Activated naive CD4-positive, alpha-beta T cell treated with anti-CD3 and anti-CD28 coated beads for 36 hours (primary cell): ENCODE measurements at regions of chr14 and their contacts with region 1.

Region 1: DNA sequence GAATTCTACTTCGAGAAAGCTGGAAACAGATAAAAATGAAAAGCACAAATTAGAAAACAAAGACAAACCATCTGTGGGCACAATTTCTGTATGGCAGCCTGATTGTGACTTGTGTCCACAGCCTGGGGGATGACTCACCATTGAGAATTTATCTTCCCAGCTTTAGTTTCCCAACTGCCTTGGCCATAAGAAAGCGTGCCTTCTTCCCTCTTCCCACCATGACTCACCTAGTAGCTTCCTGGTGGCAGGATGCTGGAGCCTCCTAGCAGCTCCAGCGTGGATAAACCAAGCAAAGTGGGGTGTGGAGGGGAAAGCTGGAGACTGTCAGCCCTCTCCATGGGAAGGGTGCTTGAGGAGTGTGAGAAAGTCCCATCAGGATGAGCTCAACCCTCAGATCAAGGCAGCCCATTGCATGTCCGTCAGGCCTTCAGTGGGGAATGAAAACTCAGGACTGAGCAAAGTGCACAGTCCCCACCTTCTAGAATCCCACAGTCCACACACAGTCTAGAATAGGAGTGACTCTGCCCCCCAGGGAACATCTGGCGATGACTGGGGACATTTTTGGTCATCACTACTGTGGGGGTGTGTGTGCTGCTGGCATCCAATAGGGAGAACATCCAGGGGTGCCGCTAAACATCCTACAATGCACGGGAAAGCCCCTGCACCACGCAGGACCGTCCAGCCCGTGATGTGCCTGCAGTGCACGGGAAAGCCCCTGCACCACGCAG is 22.4 kb upstream of the SERPINA6 start:
- DNase-seq: no peak
- H3K4me3 Mint-ChIP-seq: no peak overlapping the region
- H3K27ac Mint-ChIP-seq: peak overlapping the region; percentile 54
- H3K4me1 Mint-ChIP-seq: peaks cover 33% of the 10 kb centered on the region
- H3K27me3 Mint-ChIP-seq: peaks cover 35% of the 10 kb centered on the region

Region 2: DNA sequence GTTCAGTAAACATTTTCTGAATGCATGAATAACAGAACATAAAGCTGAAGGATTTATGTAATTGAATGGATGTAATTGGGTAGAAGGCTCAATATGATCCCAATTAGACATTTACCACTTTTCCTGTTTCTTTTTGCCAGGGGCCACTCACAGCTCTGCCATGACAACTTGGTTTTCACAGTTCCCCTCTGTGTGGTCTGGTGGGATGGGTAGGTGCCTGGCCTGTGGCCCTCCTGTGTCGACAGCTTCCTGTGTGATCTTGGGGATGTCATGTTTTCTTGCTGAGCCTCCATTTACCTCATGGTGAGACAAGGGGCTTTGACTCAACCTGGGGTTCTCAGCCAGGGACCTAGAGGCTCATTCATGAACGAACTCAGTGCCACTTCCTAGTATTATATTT is 39.9 kb before region 1 on chr14:
- CTCF ChIA-PET with region 1: no interaction called
- intact Hi-C with region 1: no loop called
- DNase-seq: no peak
- H3K4me3 Mint-ChIP-seq: no peak overlapping the region
- H3K27ac Mint-ChIP-seq: no peak overlapping the region
- H3K4me1 Mint-ChIP-seq: no peaks in the 10 kb centered on the region
- H3K27me3 Mint-ChIP-seq: peaks cover 15% of the 10 kb centered on the region

Region 3: GRCh38 chr14:94392510-94392935 is 47.0 kb after region 1 on chr14:
- CTCF ChIA-PET with region 1: no interaction called
- intact Hi-C with region 1: loop called (anchors 1 kb)
- DNase-seq: peak; percentile 85
- H3K4me3 Mint-ChIP-seq: no peak overlapping the region
- H3K27ac Mint-ChIP-seq: peak overlapping the region; percentile 82
- H3K4me1 Mint-ChIP-seq: peaks cover 48% of the 10 kb centered on the region
- H3K27me3 Mint-ChIP-seq: no peaks in the 10 kb centered on the region

Region 4: DNA sequence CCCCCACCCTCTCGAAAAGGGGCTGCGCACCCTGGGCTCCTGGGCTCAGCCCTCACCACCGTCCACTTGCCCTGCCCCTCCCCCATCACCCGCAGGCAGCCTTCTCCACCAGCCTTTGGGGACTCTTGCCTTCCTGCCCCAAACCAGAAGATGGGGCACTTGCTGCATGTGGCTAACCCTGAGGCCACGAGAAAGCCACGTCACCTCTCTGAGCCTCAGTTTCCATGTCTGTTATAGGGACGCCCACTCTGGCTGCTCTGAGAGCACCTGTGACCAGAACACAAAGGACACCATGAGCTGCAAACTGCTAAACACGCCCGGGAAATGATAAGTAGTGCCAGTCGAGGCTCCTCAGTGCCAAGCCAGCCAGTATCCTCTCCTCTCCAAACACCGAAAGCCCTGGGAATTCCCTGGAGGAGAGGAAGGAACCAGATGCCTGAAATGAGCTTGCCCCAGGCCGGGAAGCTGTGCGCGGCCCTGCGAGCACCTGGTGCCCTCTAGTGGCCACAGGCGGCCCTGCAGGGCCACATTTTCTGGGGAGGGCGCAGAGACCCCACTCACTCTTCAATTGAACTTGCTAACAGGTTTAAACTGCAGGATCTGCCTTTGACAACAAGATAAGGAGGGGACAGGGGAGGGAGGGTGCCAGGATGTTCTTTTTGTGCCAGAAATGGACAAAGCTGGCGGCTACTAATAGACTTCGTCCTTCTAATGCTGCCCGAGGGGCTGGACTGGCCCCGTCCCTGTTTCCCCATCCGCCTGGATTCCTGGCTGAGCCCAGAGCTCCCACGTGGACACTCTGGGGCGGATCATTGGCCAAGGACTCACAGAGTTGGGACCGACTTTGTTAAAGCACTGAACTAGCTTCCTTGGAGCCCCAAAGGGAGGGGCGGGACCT is 140.7 kb after region 1 on chr14:
- CTCF ChIA-PET with region 1: no interaction called
- intact Hi-C with region 1: no loop called
- DNase-seq: peak; percentile 52
- H3K4me3 Mint-ChIP-seq: no peak overlapping the region
- H3K27ac Mint-ChIP-seq: no peak overlapping the region
- H3K4me1 Mint-ChIP-seq: peaks cover 4% of the 10 kb centered on the region
- H3K27me3 Mint-ChIP-seq: peaks cover 21% of the 10 kb centered on the region